GM12878 (cell line): ENCODE measurements at regions of chr12 and their contacts with region 1.

Region 1: GRCh38 chr12:11758510-11759493 is 109.3 kb downstream of the ETV6 start:
- DNase-seq: peak; percentile 93
- ATAC-seq: peak; percentile 76
- H3K4me3 ChIP-seq: no peak overlapping the region; the same call in 1 of the 2 replicates
- H3K27ac ChIP-seq: peak overlapping the region; percentile 100
- H3K4me1 ChIP-seq: peaks cover 70% of the 10 kb centered on the region
- H3K27me3 ChIP-seq: no peaks in the 10 kb centered on the region
- CTCF ChIP-seq: no peak
- EP300 ChIP-seq: peak; percentile 78 to 91; a peak in 1 of 4 replicates
- POLR2A ChIP-seq: peak; percentile 63
- RAD21 ChIP-seq: peak; percentile 17; the same call in 1 of the 2 replicates

Region 2: DNA sequence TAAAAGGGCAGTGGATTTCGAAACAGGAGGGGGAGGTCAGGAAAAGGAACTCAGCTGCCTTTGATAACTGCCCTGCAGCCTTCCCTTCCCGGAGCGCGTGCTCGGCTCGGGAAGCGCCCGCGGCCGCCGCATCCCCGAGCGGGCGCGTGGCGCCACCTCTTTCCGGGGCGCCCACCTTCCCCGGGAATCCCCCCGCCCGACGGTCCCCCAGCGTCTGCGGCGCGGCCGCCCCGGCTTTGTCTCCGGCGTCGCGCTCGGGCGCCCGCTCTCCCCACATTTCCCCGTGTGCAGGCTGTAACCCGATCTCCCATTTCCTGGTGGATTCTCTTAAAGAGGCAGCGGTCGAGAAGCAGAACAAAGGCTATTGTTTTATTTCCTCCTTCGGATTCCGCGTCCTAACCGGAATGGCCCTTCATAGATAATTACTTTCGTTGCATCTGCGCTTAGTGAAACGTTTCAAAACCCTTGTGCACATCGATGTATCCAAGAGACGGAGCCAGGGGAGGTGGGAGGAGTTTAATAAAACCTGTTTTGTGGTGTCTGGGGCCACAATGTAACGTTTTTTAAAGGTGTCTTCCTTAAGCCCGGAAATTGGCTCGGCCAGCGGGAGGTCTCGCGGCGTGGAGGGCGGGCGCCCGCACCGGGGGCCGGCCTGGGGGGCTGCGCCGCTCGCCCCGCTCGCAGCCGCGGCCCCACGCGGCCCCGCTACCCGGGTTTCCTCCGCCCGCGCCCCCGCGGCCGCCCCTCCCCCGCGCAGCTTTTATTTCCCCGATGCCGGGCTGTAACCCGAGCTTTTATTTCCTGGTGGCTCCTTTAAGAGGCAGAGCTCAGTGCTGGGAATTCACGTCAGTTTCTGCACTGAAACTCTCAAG is 109.7 kb before region 1 on chr12 and contains the start of gene ETV6:
- CTCF ChIA-PET with region 1: interaction called, 4 read pairs
- POLR2A ChIA-PET with region 1: interaction called, 4 read pairs
- RAD21 ChIA-PET with region 1: interaction called, 37 read pairs
- SMC1A ChIA-PET with region 1: interaction called, 27 read pairs
- in situ Hi-C with region 1: loop called (anchors 5 kb)
- intact Hi-C with region 1: loop called (anchors 2 kb)
- DNase-seq: peak; percentile 86
- ATAC-seq: peak; percentile 31
- H3K4me3 ChIP-seq: peak within 1 kb of the TSS; percentile 85
- H3K27ac ChIP-seq: peak within 1 kb of the TSS; percentile 99
- H3K4me1 ChIP-seq: peaks cover 3% of the 10 kb centered on the region; the same call in 1 of the 2 replicates
- H3K27me3 ChIP-seq: no peaks in the 10 kb centered on the region
- CTCF ChIP-seq: no peak
- EP300 ChIP-seq: peak; percentile 33 to 46; a peak in 3 of 4 replicates
- POLR2A ChIP-seq: peak; percentile 80
- RAD21 ChIP-seq: no peak; the same call in 1 of the 2 replicates
- polyA plus RNA-seq, gene ETV6: 6.6 to 10.4 TPM

Region 3: GRCh38 chr12:11730299-11731041 is 28.3 kb before region 1 on chr12:
- CTCF ChIA-PET with region 1: interaction called, 41 read pairs
- POLR2A ChIA-PET with region 1: interaction called, 39 read pairs
- RAD21 ChIA-PET with region 1: interaction called, 497 read pairs
- SMC1A ChIA-PET with region 1: interaction called, 433 read pairs
- in situ Hi-C with region 1: no loop called
- intact Hi-C with region 1: loop called (anchors 1 kb)
- DNase-seq: peak; percentile 85
- ATAC-seq: peak; percentile 49
- H3K4me3 ChIP-seq: peak overlapping the region; percentile 18; the same call in 1 of the 2 replicates
- H3K27ac ChIP-seq: peak overlapping the region; percentile 89
- H3K4me1 ChIP-seq: peaks cover 93% of the 10 kb centered on the region
- H3K27me3 ChIP-seq: no peaks in the 10 kb centered on the region
- CTCF ChIP-seq: no peak
- EP300 ChIP-seq: peak in 1 of 2 experiments; percentile 52; a peak in 2 of 4 replicates
- POLR2A ChIP-seq: peak; percentile 62; the same call in 1 of the 2 replicates
- RAD21 ChIP-seq: peak; percentile 34

Region 4: DNA sequence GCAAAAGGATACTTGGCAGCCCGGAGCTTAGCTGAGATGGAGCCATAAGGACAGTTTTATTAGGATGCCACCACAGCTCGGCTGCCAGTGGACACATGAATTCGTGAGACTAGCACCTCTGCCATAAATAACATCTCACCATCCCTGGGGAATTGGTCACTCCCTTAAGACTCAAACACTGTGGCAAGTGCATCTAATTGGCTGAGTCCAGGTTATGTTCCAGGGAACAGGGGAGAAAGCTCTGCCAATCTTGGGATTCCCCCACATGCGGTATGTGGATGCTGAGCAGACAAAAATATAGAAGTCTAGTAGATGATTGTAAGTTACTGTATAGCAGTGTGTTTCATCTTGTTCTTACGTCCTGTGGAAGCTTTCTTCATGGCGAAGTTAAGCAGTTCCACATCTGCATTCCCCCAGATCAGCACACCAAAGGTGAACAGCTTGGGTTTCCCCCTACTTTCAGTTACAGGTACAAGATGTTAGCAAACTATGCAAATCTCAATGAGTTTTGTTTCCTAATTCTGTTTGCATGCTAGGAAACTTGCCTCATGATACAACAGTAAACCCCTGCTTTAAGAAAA is 21.8 kb after region 1 on chr12:
- CTCF ChIA-PET with region 1: interaction called, 9 read pairs
- POLR2A ChIA-PET with region 1: interaction called, 91 read pairs
- RAD21 ChIA-PET with region 1: interaction called, 212 read pairs
- SMC1A ChIA-PET with region 1: interaction called, 1,116 read pairs
- in situ Hi-C with region 1: no loop called
- intact Hi-C with region 1: loop called (anchors 1 kb)
- DNase-seq: peak; percentile 94
- ATAC-seq: peak; percentile 79
- H3K4me3 ChIP-seq: peak overlapping the region; percentile 13; the same call in 1 of the 2 replicates
- H3K27ac ChIP-seq: peak overlapping the region; percentile 95
- H3K4me1 ChIP-seq: peaks cover 67% of the 10 kb centered on the region
- H3K27me3 ChIP-seq: no peaks in the 10 kb centered on the region
- CTCF ChIP-seq: no peak
- EP300 ChIP-seq: peak; percentile 67 to 91; a peak in 2 of 4 replicates
- POLR2A ChIP-seq: peak; percentile 48; the same call in 1 of the 2 replicates
- RAD21 ChIP-seq: 0 out of 2 replicates have a peak, but pooled peaks have one; percentile 3

Region 5: DNA sequence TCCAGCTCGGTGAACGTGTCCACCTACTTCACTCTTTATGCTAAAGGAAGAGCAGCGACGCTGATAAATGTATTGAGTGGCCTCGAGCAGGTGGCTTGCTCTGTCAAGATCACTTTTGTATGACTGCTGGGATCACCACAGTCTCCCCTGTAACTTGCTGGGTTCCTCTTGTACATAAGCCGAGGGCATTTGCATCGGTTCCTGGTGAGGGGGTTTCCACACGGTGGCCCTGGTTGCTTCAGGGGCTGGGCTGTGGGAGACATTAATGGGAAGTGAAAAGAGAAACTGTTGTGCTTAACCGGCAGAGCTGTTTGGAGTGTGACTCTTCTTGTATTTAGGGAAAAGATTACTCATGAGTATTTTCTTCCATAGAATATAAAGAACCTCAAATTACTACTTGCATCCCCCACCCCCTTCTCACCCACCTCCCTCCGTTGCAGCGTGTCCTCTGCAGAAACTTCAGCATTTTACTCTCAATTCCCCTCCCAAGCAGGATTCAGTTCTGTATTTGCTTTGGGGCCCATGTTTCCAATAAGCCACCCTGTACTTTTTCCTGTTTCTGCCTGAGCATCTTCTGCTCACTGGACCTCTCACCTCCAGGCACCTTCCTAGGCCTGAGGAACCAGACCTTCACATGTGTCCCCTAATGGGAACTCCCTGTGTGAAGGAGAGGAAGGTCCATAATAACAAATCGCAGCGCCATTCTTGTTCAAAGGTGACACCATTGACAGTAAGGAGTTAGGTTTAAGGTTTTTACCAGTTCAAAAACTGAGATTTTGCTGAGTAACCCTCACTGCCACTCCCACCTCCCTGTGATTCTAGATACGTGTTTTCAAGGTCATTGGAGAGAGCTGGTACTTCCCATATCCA is 77.7 kb after region 1 on chr12:
- CTCF ChIA-PET with region 1: interaction called, 3 read pairs
- POLR2A ChIA-PET with region 1: interaction called, 5 read pairs
- RAD21 ChIA-PET with region 1: interaction called, 86 read pairs
- SMC1A ChIA-PET with region 1: interaction called, 140 read pairs
- in situ Hi-C with region 1: no loop called
- intact Hi-C with region 1: loop called (anchors 1 kb)
- DNase-seq: peak; percentile 99
- ATAC-seq: peak; percentile 89
- H3K4me3 ChIP-seq: no peak overlapping the region
- H3K27ac ChIP-seq: peak overlapping the region; percentile 97
- H3K4me1 ChIP-seq: peaks cover 76% of the 10 kb centered on the region
- H3K27me3 ChIP-seq: no peaks in the 10 kb centered on the region
- CTCF ChIP-seq: no peak
- EP300 ChIP-seq: peak; percentile 90 to 99
- POLR2A ChIP-seq: peak; percentile 68
- RAD21 ChIP-seq: peak; percentile 25; the same call in 1 of the 2 replicates